CD14-positive monocyte (primary cell): ENCODE measurements at regions of chr2 and their contacts with region 1.

Region 1: DNA sequence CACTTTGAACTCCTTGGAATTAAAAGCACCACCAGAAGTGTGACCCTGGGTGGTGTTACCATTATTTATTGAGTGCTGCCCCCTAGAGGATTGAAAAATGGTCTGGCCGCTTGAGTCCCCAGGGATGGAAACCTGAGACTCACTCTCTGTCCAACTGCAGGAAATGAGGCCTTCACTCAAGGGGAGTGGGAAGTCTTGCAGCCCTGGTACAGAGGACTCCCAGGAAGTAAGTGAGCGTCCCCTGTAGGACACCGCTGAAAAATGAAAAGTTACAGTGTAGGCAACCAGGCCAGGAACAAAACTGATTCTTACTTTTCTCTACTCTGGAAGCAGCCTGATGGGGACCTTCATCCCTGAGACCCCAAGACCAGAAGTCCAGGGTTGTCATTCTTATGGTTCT is 2.2 kb upstream of the NRP2 start:
- DNase-seq: peak; percentile 28 to 71 (median 44)
- H3K4me3 ChIP-seq: no peak overlapping the region
- H3K4me3 Mint-ChIP-seq: peak overlapping the region in 1 of 2 donors; percentile 77
- H3K27ac ChIP-seq: no peak overlapping the region
- H3K27ac Mint-ChIP-seq: peak overlapping the region in 1 of 7 donors; percentile 48
- H3K4me1 ChIP-seq: peaks cover 21 to 33% of the 10 kb centered on the region in 2 donors
- H3K4me1 Mint-ChIP-seq: peaks cover 28% of the 10 kb centered on the region
- H3K27me3 ChIP-seq: peaks cover 40 to 64% of the 10 kb centered on the region in 2 donors
- H3K27me3 Mint-ChIP-seq: peaks cover 46 to 56% (median 47%) of the 10 kb centered on the region in 3 donors
- CTCF ChIP-seq: peak; percentile 77

Region 2: GRCh38 chr2:204145263-204145751 is 1534.8 kb before region 1 on chr2:
- intact Hi-C with region 1: loop called in 1 of 2 experiments (anchors 10 kb)
- DNase-seq: peak; percentile 44 to 58 (median 55)
- H3K4me3 ChIP-seq: peak overlapping the region; percentile 17 to 72 (median 50)
- H3K4me3 Mint-ChIP-seq: peak overlapping the region; percentile 47 to 85
- H3K27ac ChIP-seq: no peak overlapping the region
- H3K27ac Mint-ChIP-seq: no peak overlapping the region
- H3K4me1 ChIP-seq: peaks cover 5 to 9% of the 10 kb centered on the region in 2 donors
- H3K4me1 Mint-ChIP-seq: peaks cover 8% of the 10 kb centered on the region
- H3K27me3 ChIP-seq: no peaks in the 10 kb centered on the region
- H3K27me3 Mint-ChIP-seq: peaks cover 0 to 5% (median 5%) of the 10 kb centered on the region in 3 donors
- CTCF ChIP-seq: peak; percentile 98

Region 3: GRCh38 chr2:204325468-204325867 is 1354.6 kb before region 1 on chr2:
- intact Hi-C with region 1: loop called (anchors 5 kb)
- DNase-seq: peak; percentile 21 to 43 (median 26)
- H3K4me3 ChIP-seq: no peak overlapping the region
- H3K4me3 Mint-ChIP-seq: no peak overlapping the region
- H3K27ac ChIP-seq: no peak overlapping the region
- H3K27ac Mint-ChIP-seq: no peak overlapping the region
- H3K4me1 ChIP-seq: no peaks in the 10 kb centered on the region
- H3K4me1 Mint-ChIP-seq: peaks cover 4% of the 10 kb centered on the region
- H3K27me3 ChIP-seq: no peaks in the 10 kb centered on the region
- H3K27me3 Mint-ChIP-seq: peaks cover 0 to 4% (median 2%) of the 10 kb centered on the region in 3 donors
- CTCF ChIP-seq: peak; percentile 86

Region 4: DNA sequence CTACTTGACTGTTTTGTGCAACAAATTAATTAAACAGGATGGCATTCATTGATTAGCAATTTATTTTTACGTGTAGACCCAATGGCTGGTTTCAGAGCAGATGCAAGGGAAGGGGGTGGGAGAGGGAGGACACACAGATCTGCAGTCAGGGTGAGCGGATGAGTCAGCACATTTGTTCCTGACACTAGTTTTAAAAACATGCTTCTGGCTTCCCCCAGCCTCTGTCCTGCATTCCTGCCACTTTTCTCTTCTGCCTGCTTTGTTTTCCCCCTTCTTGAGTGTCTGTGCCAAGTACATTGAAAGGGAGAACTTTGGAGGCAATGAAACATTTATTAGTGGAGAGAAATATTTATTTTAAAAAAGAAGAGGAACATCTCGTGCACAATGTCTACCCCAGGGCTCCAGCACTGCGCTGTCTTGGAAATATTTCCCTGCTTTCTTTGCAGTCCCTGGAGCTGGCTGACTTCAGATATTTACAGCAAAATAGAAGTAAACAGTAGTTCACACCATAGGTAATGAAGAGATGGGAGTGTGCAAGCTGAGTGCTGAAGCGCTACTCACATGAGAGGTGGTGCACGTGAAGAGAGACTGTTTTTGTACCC is 54.5 kb after region 1 on chr2:
- intact Hi-C with region 1: loop called (anchors 10 kb)
- DNase-seq: peak in 2 of 3 donors; percentile 12 to 20
- H3K4me3 ChIP-seq: no peak overlapping the region
- H3K4me3 Mint-ChIP-seq: peak overlapping the region in 1 of 2 donors; percentile 32
- H3K27ac ChIP-seq: no peak overlapping the region
- H3K27ac Mint-ChIP-seq: no peak overlapping the region
- H3K4me1 ChIP-seq: peaks cover 9 to 10% of the 10 kb centered on the region in 2 donors
- H3K4me1 Mint-ChIP-seq: peaks cover 16% of the 10 kb centered on the region
- H3K27me3 ChIP-seq: no peaks in the 10 kb centered on the region
- H3K27me3 Mint-ChIP-seq: peaks cover 0 to 5% (median 3%) of the 10 kb centered on the region in 3 donors
- CTCF ChIP-seq: no peak